ENCODE measurements at regions of chr15 and their contacts with region 1.

Region 1: GRCh38 chr15:66700802-66701421 is 1.1 kb upstream of the SMAD6 start:
- DNase-seq: peak; percentile 85
- H3K4me3 ChIP-seq: peak overlapping the region; percentile 63
- CTCF ChIP-seq: no peak

Region 2: GRCh38 chr15:66595931-66596545 is 104.9 kb before region 1 on chr15:
- in situ Hi-C with region 1: loop called (anchors 5 kb)
- DNase-seq: no peak
- H3K4me3 ChIP-seq: no peak overlapping the region
- CTCF ChIP-seq: no peak

Measured in astrocyte of the cerebellum (primary cell).